Activated naive CD4-positive, alpha-beta T cell treated with anti-CD3 and anti-CD28 coated beads for 36 hours (primary cell): ENCODE measurements at regions of chr1 and their contacts with region 1.

Region 1: GRCh38 chr1:231460614-231461013 is 38.5 kb upstream of the EGLN1 start:
- DNase-seq: peak; percentile 81
- H3K4me3 Mint-ChIP-seq: no peak overlapping the region
- H3K27ac Mint-ChIP-seq: no peak overlapping the region
- H3K4me1 Mint-ChIP-seq: peaks cover 25% of the 10 kb centered on the region
- H3K27me3 Mint-ChIP-seq: peaks cover 63% of the 10 kb centered on the region

Region 2: GRCh38 chr1:231376875-231377549 is 83.6 kb before region 1 on chr1:
- CTCF ChIA-PET with region 1: no interaction called
- intact Hi-C with region 1: loop called (anchors 2 kb)
- DNase-seq: peak; percentile 31
- H3K4me3 Mint-ChIP-seq: no peak overlapping the region
- H3K27ac Mint-ChIP-seq: peak overlapping the region; percentile 24
- H3K4me1 Mint-ChIP-seq: peaks cover 43% of the 10 kb centered on the region
- H3K27me3 Mint-ChIP-seq: no peaks in the 10 kb centered on the region

Region 3: GRCh38 chr1:231528172-231529029 is 67.8 kb after region 1 on chr1 and contains the start of gene TSNAX:
- CTCF ChIA-PET with region 1: no interaction called
- intact Hi-C with region 1: loop called (anchors 2 kb)
- DNase-seq: peak; percentile 86
- H3K4me3 Mint-ChIP-seq: peak within 1 kb of the TSS; percentile 96
- H3K27ac Mint-ChIP-seq: peak within 1 kb of the TSS; percentile 97
- H3K4me1 Mint-ChIP-seq: peaks cover 47% of the 10 kb centered on the region
- H3K27me3 Mint-ChIP-seq: no peaks in the 10 kb centered on the region
- total RNA-seq, gene TSNAX: 25.7 to 28.2 TPM

Region 4: DNA sequence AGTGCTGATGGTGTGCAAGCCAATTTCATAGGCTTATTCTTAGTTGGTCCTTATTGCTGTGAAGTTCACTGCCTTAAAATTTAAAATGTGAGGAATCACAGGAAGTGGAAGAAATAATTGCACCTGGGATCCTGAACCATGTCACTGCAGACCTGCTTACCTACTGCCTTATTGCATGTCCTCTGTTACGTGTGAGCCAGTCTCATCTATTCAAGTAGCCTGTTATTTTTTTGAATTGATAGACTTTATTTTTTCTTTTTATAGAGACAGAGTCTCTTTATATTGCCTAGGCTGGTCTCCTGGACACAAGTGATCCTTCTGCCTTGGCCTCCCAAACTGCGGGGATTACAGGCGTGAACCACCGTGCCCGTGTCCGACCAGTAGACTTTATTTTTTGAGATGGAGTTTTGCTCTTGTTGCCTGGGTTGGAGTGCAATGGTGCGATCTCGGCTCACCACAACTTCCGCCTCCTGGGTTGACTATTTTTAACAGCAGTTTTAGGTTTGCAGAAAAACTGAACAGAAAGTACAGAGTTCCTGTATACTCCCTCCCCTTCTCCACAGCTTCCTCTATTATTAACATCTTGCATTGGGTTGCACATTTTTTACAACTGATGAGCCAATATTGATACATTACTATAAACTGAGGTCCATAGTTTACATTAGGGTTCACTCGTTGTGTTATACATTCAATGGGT is 151.9 kb after region 1 on chr1:
- CTCF ChIA-PET with region 1: no interaction called
- intact Hi-C with region 1: loop called (anchors 1 kb)
- DNase-seq: peak; percentile 82
- H3K4me3 Mint-ChIP-seq: peak overlapping the region; percentile 41
- H3K27ac Mint-ChIP-seq: peak overlapping the region; percentile 83
- H3K4me1 Mint-ChIP-seq: peaks cover 46% of the 10 kb centered on the region
- H3K27me3 Mint-ChIP-seq: no peaks in the 10 kb centered on the region